ENCODE measurements at regions of chr2 and their contacts with region 1.

Region 1: DNA sequence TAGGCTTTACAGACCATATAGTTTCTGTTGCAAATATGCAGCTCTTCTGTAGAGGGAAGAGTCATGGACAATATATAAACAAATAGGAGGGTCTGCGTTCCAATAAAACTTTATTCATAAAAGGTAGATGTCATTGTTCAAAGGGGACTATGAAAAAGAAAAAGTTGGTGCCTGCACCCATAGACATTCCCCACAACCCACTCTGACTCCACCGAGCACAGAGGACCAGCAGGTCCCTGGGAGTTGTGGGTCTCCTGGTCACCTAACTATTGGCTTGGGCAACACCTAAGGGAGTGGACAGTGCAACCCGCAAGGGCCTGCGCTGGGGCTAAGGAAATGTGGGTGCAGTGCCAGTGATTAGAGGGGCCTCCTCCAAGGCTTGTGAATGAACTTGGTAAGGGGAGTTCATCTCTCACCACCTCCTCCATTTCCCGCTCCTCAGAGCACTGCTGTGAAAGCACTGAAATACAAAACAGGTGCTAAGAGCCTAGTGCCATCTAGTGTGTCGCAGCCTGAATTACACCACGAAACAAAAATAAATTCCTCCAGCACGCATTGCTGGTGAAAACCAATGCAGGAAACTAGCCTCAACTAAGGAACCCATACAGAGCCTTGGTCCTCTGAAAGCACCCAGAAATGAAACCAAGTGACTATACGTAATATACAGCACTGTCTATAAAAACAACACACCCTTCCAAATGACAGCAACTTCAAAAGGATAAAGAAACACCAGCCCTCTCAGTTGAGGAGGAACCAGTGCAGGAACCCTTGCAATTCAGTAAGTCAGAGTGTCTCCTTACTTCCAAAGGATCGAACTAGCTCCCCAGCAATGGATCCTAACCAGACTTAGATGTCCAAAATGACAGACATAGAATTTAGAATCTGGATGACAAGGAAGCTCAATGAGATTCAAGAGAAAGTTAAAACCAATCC is 166.6 kb downstream of the RNF144A start:
- DNase-seq: peak; percentile 19
- H3K4me3 Mint-ChIP-seq: no peak overlapping the region
- H3K27ac Mint-ChIP-seq: no peak overlapping the region
- H3K4me1 Mint-ChIP-seq: no peaks in the 10 kb centered on the region
- H3K27me3 Mint-ChIP-seq: no peaks in the 10 kb centered on the region

Region 2: DNA sequence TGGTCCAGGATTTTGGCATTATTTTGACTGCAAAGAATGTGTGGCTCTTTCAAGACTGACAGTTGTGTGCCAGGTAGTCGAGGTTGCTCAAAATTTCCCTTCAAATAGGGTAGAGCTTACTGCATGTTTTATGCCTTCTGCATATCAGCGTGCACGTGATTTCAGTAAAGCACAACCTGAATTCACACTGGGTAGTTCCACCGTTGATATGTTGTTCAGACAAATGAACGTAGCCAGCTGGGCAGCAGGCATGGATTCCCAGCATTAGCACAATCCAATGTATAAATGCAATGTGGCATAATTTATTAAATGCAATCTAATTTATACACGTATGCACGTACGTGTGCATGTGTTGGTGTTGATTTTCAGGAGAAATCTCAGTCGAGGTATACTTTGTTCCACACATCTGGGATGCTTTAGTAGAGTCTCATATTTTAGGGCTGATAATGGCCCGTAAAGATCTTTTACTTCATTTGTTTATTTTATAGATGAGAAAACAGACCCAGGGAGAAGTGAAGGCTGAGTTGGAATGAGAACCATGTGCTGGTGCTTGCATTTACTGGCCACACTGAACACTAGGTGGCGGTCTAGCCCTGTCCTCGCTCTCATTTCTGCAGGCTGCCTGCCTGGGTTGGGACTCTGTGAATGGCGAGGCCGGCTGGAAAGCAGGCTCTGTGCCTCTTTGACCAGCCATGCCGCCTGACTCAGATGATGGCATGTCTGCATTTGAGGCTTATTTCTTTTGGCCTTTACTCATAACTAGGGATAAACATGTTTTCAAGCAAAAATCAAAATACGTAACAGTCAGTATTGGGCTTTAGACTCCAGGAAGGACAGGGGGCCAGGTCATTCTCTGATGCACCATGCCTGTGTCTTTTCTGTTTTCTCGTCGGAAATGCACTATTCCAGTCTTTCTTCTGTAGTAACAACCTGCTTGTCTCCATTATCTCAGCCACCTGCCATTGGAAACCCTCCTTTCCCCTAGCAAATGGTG is 46.2 kb before region 1 on chr2:
- CTCF ChIA-PET with region 1: no interaction called
- intact Hi-C with region 1: loop called (anchors 1 kb)
- DNase-seq: peak; percentile 63
- H3K4me3 Mint-ChIP-seq: no peak overlapping the region
- H3K27ac Mint-ChIP-seq: no peak overlapping the region
- H3K4me1 Mint-ChIP-seq: no peaks in the 10 kb centered on the region
- H3K27me3 Mint-ChIP-seq: no peaks in the 10 kb centered on the region

Region 3: GRCh38 chr2:7133521-7133920 is 49.7 kb after region 1 on chr2:
- CTCF ChIA-PET with region 1: no interaction called
- intact Hi-C with region 1: no loop called
- DNase-seq: no peak
- H3K4me3 Mint-ChIP-seq: no peak overlapping the region
- H3K27ac Mint-ChIP-seq: no peak overlapping the region
- H3K4me1 Mint-ChIP-seq: peaks cover under 1% of the 10 kb centered on the region
- H3K27me3 Mint-ChIP-seq: no peaks in the 10 kb centered on the region

Measured in activated naive CD4-positive, alpha-beta T cell treated with anti-CD3 and anti-CD28 coated beads for 36 hours (primary cell).